ENCODE measurements at regions of chr5 and their contacts with region 1.

Region 1: GRCh38 chr5:178732281-178732680 is 1.8 kb upstream of the ZNF354A start:
- DNase-seq: no peak
- H3K4me3 Mint-ChIP-seq: no peak overlapping the region
- H3K27ac Mint-ChIP-seq: no peak overlapping the region
- H3K4me1 Mint-ChIP-seq: peaks cover 6% of the 10 kb centered on the region
- H3K27me3 Mint-ChIP-seq: peaks cover 1% of the 10 kb centered on the region

Region 2: DNA sequence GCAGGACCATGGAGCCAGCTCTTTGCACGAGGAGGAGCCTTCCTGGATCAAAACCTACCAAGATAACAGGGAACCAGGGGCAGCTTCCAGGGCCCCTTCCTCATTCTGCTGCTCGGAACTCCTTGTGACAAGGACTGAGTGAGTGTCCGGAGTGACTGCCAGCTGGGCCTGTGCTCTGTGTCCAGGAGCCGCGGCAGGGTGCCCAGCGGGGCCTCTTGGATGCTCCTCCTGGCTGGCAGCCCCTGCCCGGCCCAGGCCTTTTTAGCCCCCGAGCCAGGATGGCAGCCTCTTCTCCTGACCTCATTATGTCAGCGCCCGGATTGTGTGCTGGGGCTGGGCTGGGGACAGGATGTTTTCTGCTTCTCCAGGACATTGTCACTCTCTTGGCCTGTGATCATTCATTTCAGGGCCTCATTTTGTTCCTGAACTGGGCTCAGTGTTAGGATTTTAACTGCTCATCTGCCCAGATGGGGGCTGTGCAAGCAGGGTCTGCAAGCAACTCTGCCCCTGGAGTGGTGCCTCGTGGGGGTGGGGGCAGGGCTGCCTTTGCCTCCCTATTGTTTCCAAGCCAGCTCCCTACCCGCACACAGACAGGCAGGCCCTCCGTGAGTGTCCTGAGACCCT is 303.8 kb before region 1 on chr5:
- intact Hi-C with region 1: no loop called
- DNase-seq: no peak
- H3K4me3 Mint-ChIP-seq: no peak overlapping the region
- H3K27ac Mint-ChIP-seq: no peak overlapping the region
- H3K4me1 Mint-ChIP-seq: no peaks in the 10 kb centered on the region
- H3K27me3 Mint-ChIP-seq: no peaks in the 10 kb centered on the region

Region 3: GRCh38 chr5:178667101-178667500 is 65.2 kb before region 1 on chr5:
- intact Hi-C with region 1: no loop called
- DNase-seq: no peak
- H3K4me3 Mint-ChIP-seq: no peak overlapping the region
- H3K27ac Mint-ChIP-seq: no peak overlapping the region
- H3K4me1 Mint-ChIP-seq: no peaks in the 10 kb centered on the region
- H3K27me3 Mint-ChIP-seq: no peaks in the 10 kb centered on the region

Region 4: GRCh38 chr5:178859625-178860531 is 127.6 kb after region 1 on chr5 and contains the start of gene ZNF354B:
- intact Hi-C with region 1: loop called (anchors 1 kb)
- DNase-seq: peak; percentile 79
- H3K4me3 Mint-ChIP-seq: peak within 1 kb of the TSS; percentile 88
- H3K27ac Mint-ChIP-seq: peak within 1 kb of the TSS; percentile 75
- H3K4me1 Mint-ChIP-seq: peaks cover 25% of the 10 kb centered on the region
- H3K27me3 Mint-ChIP-seq: no peaks in the 10 kb centered on the region
- total RNA-seq, gene ZNF354B: 15.2 and 15.3 TPM in 2 replicates

Region 5: GRCh38 chr5:179060116-179061008 is 328.1 kb after region 1 on chr5 and contains the start of gene ZNF354C:
- intact Hi-C with region 1: loop called (anchors 1 kb)
- DNase-seq: peak; percentile 76
- H3K4me3 Mint-ChIP-seq: peak within 1 kb of the TSS; percentile 88
- H3K27ac Mint-ChIP-seq: peak within 1 kb of the TSS; percentile 61
- H3K4me1 Mint-ChIP-seq: no peaks in the 10 kb centered on the region
- H3K27me3 Mint-ChIP-seq: no peaks in the 10 kb centered on the region
- total RNA-seq, gene ZNF354C: 3.5 and 4.1 TPM in 2 replicates

Region 6: GRCh38 chr5:179494774-179495526 is 762.7 kb after region 1 on chr5:
- intact Hi-C with region 1: loop called (anchors 1 kb)
- DNase-seq: no peak
- H3K4me3 Mint-ChIP-seq: no peak overlapping the region
- H3K27ac Mint-ChIP-seq: no peak overlapping the region
- H3K4me1 Mint-ChIP-seq: no peaks in the 10 kb centered on the region
- H3K27me3 Mint-ChIP-seq: peaks cover 8% of the 10 kb centered on the region

Region 7: DNA sequence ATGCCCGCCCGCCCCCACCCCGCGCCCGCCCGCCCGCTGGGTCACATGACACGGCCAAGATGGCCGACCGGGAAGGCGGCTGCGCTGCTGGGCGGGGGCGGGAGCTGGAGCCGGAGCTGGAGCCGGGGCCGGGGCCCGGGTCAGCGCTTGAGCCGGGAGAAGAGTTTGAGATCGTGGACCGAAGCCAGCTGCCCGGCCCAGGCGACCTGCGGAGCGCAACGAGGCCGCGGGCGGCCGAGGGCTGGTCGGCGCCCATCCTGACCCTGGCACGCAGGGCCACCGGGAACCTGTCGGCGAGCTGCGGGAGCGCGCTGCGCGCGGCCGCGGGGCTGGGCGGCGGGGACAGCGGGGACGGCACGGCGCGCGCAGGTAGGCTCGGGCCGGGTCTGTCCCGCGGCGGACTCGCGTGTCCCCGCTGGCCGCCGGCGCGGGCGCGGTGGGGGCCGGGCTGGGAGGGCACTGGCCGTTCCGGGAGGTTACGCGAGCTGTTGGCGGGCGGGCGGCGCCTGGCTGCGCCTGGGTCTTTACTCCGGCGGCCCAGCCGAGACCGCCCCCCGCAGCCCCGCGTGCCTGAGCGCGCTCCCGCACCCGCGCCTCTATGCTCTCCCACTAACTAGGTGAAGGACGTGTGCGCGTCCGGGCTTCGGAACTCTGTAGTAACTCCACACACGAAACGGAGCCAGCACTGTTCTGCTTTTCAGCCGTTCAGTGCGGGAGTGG is 818.4 kb after region 1 on chr5 and contains the start of gene RUFY1:
- intact Hi-C with region 1: loop called (anchors 2 kb)
- DNase-seq: peak; percentile 83
- H3K4me3 Mint-ChIP-seq: peak within 1 kb of the TSS; percentile 99
- H3K27ac Mint-ChIP-seq: peak within 1 kb of the TSS; percentile 99
- H3K4me1 Mint-ChIP-seq: peaks cover 28% of the 10 kb centered on the region
- H3K27me3 Mint-ChIP-seq: peaks cover 2% of the 10 kb centered on the region
- total RNA-seq, gene RUFY1: 37.0 and 38.3 TPM in 2 replicates